ENCODE measurements at regions of chr5 and their contacts with region 1.

Region 1: GRCh38 chr5:76175051-76175666 is 92.0 kb downstream of the SV2C start:
- DNase-seq: peak in 1 of 2 donors; percentile 18
- ATAC-seq: peak in 1 of 8 donors; percentile 17
- H3K4me3 ChIP-seq: no peak overlapping the region
- H3K27ac ChIP-seq: peak overlapping the region in 1 of 10 donors; percentile 48
- H3K4me1 ChIP-seq: peaks cover 0 to 15% (median 0%) of the 10 kb centered on the region in 9 donors
- H3K27me3 ChIP-seq: peaks cover 0 to 10% (median 0%) of the 10 kb centered on the region in 7 donors
- CTCF ChIP-seq: peak; percentile 17 to 73 (median 66)

Region 2: GRCh38 chr5:75734913-75735789 is 440.0 kb before region 1 on chr5:
- intact Hi-C with region 1: loop called in 5 of 10 experiments (anchors 5 to 10 kb)
- DNase-seq: peak in 1 of 2 donors; percentile 13
- ATAC-seq: peak in 6 of 8 donors; percentile 38 to 90 (median 64)
- H3K4me3 ChIP-seq: no peak overlapping the region
- H3K27ac ChIP-seq: no peak overlapping the region
- H3K4me1 ChIP-seq: no peaks in the 10 kb centered on the region
- H3K27me3 ChIP-seq: peaks cover 0 to 15% (median 0%) of the 10 kb centered on the region in 7 donors
- CTCF ChIP-seq: peak in 7 of 9 donors; percentile 44 to 66 (median 56)